Mammary epithelial cell (primary cell): ENCODE measurements at regions of chr14 and their contacts with region 1.

Region 1: DNA sequence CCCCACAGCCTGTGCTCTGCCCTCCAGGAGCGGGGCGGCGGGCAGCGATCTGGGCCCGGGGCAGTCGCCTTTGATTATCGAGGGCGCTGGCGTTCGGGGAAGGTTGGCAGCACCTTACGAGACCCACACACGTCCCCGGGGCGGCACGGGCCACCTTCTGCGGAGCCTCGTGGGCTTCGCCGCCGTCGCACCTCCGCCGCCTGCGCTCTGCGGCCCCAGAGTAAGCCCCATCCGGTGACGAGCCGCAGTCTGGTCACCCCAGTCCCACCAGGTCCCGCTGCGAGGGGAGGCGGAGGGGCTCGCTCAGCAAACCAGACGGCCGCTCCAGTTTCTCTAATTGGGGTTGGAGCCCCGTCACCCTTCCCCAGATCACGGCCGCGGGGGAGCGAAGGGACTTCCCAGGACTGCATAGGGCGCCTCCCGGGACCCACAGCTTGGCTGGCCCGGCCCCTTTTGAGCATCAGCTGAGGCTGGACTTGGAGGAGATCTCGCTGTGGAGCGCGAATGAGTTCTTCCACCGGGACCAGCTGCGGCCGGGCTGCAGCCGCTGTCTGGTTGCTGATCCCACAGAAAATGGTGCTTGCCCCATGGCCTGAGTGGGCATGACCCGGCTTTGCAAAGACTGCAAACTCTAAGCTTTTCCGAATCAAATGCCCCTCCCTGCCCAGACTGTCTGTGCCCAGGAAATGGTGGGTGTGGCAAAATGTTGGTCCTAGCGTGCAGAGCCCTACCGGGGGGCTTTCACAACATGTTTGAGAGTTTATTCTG is 560 bp downstream of the LGALS3 start:
- DNase-seq: peak; percentile 70
- H3K4me3 ChIP-seq: peak overlapping the region; percentile 72 to 76 (median 74)
- H3K27ac ChIP-seq: peak overlapping the region; percentile 93
- H3K4me1 ChIP-seq: peaks cover 29% of the 10 kb centered on the region
- H3K27me3 ChIP-seq: no peaks in the 10 kb centered on the region
- CTCF ChIP-seq: no peak

Region 2: GRCh38 chr14:55071870-55072640 is 57.6 kb before region 1 on chr14:
- CTCF ChIA-PET with region 1: no interaction called
- dilution Hi-C with region 1: loop called (anchors 5 kb)
- in situ Hi-C with region 1: no loop called
- intact Hi-C with region 1: loop called (anchors 1 kb)
- DNase-seq: peak; percentile 95
- H3K4me3 ChIP-seq: peak overlapping the region in 1 of 3 experiments; percentile 28
- H3K27ac ChIP-seq: peak overlapping the region; percentile 99
- H3K4me1 ChIP-seq: peaks cover 42% of the 10 kb centered on the region
- H3K27me3 ChIP-seq: no peaks in the 10 kb centered on the region
- CTCF ChIP-seq: no peak

Region 3: DNA sequence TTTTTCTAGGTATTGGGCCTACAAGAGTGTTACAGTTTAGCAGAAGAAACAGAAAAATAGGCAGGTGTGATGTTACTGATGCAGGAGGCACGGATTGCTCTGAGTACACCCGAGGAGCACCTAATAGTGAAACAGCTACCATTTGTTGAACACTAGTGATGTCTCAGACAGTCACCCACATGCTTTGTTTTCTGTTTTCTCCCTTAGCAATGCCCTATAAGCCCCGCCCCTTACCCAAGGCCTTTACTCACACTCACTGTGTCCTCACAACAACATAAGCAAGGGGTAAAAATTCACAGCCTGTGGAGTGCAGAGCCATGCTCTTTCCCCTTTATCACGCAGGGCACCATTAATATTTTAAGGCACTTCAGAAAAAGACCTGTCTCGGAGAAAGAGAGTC is 52.5 kb before region 1 on chr14:
- CTCF ChIA-PET with region 1: no interaction called
- dilution Hi-C with region 1: loop called (anchors 5 kb)
- in situ Hi-C with region 1: no loop called
- intact Hi-C with region 1: loop called (anchors 1 kb)
- DNase-seq: peak; percentile 83
- H3K4me3 ChIP-seq: no peak overlapping the region
- H3K27ac ChIP-seq: peak overlapping the region; percentile 100
- H3K4me1 ChIP-seq: peaks cover 42% of the 10 kb centered on the region
- H3K27me3 ChIP-seq: no peaks in the 10 kb centered on the region
- CTCF ChIP-seq: no peak

Region 4: GRCh38 chr14:55097881-55098560 is 31.6 kb before region 1 on chr14:
- CTCF ChIA-PET with region 1: no interaction called
- dilution Hi-C with region 1: no loop called
- in situ Hi-C with region 1: loop called (anchors 5 kb)
- intact Hi-C with region 1: loop called (anchors 1 kb)
- DNase-seq: peak; percentile 63
- H3K4me3 ChIP-seq: no peak overlapping the region
- H3K27ac ChIP-seq: no peak overlapping the region
- H3K4me1 ChIP-seq: peaks cover 15% of the 10 kb centered on the region
- H3K27me3 ChIP-seq: no peaks in the 10 kb centered on the region
- CTCF ChIP-seq: no peak

Region 5: DNA sequence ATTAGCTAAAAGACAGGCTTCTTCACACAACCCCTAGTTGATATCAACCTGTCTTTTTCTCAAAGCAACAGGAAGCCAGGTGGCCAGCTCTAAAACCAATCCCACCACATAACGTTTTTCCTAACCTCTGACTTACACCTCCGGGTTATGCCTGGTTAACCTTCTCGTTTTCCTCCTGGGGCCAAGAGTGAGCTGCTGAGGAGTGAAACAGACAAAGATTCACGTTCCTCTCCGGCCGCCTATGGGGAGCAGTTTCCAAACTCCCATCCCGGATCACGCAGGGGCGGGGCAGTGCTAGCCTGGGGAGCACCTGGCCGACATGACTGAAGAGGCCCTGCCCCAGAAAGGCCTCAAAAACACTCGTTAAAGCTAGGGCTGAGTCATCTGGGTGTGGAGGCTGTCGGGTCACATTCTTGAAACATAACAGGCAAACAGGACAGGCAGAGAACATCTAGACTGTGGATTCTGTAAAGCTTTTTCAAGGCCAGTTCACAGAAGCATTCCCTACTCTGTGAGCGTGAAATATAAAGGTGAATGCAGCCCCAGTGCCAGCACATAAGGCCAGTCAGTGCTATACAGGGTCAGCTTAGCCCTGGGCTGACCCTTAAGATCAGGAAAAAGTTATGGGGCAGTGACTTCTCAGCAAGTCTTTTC is 26.5 kb before region 1 on chr14:
- CTCF ChIA-PET with region 1: no interaction called
- dilution Hi-C with region 1: no loop called
- in situ Hi-C with region 1: loop called in 1 of 2 experiments (anchors 5 kb)
- intact Hi-C with region 1: loop called (anchors 1 kb)
- DNase-seq: peak; percentile 99
- H3K4me3 ChIP-seq: peak overlapping the region; percentile 29 to 45 (median 33)
- H3K27ac ChIP-seq: peak overlapping the region; percentile 99
- H3K4me1 ChIP-seq: peaks cover 37% of the 10 kb centered on the region
- H3K27me3 ChIP-seq: no peaks in the 10 kb centered on the region
- CTCF ChIP-seq: no peak